ENCODE measurements at regions of chr11 and their contacts with region 1.

Region 1: DNA sequence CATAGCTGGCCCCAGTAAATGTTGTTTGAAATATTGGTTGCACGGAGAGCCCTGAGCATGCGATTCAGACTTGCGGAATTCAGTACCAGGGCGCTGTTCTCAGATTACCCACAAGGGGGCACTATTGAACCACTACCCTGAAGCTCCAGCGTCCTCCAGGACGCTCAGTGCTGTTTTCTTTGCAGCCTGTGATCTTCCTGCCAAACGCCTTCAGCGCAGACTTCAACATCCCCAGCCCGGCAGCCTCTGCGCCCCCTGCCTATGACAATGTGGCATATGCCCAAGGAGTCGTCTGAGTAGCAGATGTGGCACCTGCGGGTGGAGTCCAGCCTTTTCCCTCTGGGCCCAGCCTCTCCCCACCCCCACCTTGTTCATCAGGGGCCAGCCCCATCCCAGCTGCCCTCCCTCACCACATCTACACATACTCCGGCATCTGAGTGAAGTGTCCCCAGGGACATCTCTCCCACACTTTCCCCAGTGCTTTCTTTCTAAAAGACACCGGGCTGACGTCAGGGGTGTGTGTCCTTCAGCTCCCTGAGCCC is 9.6 kb upstream of the MS4A10 start:
- DNase-seq: peak; percentile 82
- H3K4me3 Mint-ChIP-seq: no peak overlapping the region
- H3K27ac Mint-ChIP-seq: no peak overlapping the region
- H3K4me1 Mint-ChIP-seq: peaks cover 4% of the 10 kb centered on the region
- H3K27me3 Mint-ChIP-seq: peaks cover 10% of the 10 kb centered on the region

Region 2: DNA sequence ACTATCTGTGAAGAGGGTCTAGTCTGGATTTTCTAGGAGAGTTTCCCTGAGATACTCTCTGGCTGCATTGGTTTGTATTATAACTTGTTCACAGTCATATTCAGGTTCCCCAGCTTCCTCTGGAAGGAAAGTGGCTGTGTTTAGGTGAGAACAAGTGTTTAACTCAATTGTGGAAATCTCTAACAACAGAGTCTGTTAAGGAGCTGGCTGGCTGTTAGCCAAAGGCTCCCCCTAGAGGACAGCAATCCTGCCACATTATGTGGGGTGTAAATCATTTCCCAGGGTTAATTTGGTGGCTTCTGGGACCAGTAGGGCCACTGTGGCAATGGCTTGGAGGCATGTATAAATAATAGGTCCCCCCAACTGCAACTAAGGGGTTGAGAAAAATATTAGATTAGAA is 430.0 kb before region 1 on chr11:
- CTCF ChIA-PET with region 1: no interaction called
- POLR2A ChIA-PET with region 1: no interaction called
- DNase-seq: no peak
- H3K4me3 Mint-ChIP-seq: no peak overlapping the region
- H3K27ac Mint-ChIP-seq: no peak overlapping the region
- H3K4me1 Mint-ChIP-seq: no peaks in the 10 kb centered on the region
- H3K27me3 Mint-ChIP-seq: peaks cover 15% of the 10 kb centered on the region

Region 3: GRCh38 chr11:60762851-60763691 is 12.4 kb before region 1 on chr11:
- CTCF ChIA-PET with region 1: interaction called, 83 read pairs
- POLR2A ChIA-PET with region 1: no interaction called
- DNase-seq: no peak
- H3K4me3 Mint-ChIP-seq: no peak overlapping the region
- H3K27ac Mint-ChIP-seq: no peak overlapping the region
- H3K4me1 Mint-ChIP-seq: peaks cover 5% of the 10 kb centered on the region
- H3K27me3 Mint-ChIP-seq: peaks cover 34% of the 10 kb centered on the region

Region 4: DNA sequence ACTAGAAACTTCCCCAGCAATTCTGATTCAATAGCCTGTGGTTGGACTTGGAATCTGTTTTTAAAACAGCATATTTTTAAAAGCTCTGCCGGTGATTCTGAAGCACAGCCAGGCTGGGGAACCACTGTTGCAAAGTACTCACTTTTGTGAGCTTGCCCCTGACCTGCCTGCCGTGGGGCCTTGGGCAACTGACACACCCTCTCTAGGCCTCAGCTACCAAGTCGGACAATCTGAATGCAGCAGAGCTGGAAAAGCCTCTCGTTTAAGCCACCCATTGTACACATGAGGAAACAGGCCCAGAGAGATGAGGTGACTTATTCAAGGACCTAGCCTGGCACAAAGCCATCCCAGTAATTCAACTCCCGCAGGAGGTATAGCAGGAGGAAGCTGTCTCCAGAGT is 167.6 kb after region 1 on chr11:
- CTCF ChIA-PET with region 1: no interaction called
- POLR2A ChIA-PET with region 1: no interaction called
- DNase-seq: no peak
- H3K4me3 Mint-ChIP-seq: no peak overlapping the region
- H3K27ac Mint-ChIP-seq: no peak overlapping the region
- H3K4me1 Mint-ChIP-seq: no peaks in the 10 kb centered on the region
- H3K27me3 Mint-ChIP-seq: peaks cover 9% of the 10 kb centered on the region